ENCODE measurements at regions of chr7 and their contacts with region 1.

Region 1: GRCh38 chr7:88881136-88881535 is 85.6 kb upstream of the TEX47 start:
- DNase-seq: no peak
- H3K27ac ChIP-seq: no peak overlapping the region
- CTCF ChIP-seq: no peak

Region 2: DNA sequence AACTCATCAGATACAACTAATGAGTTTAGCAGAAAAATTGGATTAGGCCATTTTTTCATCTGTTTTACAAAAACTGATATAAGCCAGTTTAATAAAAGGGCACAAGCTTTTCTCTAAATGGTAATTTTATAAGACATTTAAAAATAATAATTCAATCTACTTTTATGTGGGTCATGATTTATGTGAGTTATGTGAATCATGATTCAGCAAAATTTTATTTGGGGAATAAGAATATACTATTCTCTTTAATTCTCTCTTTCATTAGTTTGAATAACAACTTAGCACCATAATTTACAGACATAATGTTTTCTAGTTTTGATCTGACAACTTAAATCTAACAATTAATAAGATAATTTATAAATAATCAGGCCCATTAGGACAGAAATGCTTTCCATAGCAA is 21.8 kb before region 1 on chr7:
- CTCF ChIA-PET with region 1: no interaction called
- POLR2A ChIA-PET with region 1: interaction called, 16 read pairs
- DNase-seq: no peak
- H3K27ac ChIP-seq: no peak overlapping the region
- CTCF ChIP-seq: no peak

Region 3: GRCh38 chr7:89036830-89037229 is 155.7 kb after region 1 on chr7:
- CTCF ChIA-PET with region 1: no interaction called
- POLR2A ChIA-PET with region 1: no interaction called
- DNase-seq: no peak
- H3K27ac ChIP-seq: no peak overlapping the region
- CTCF ChIP-seq: no peak